ENCODE measurements at regions of chr17 and their contacts with region 1.

Region 1: DNA sequence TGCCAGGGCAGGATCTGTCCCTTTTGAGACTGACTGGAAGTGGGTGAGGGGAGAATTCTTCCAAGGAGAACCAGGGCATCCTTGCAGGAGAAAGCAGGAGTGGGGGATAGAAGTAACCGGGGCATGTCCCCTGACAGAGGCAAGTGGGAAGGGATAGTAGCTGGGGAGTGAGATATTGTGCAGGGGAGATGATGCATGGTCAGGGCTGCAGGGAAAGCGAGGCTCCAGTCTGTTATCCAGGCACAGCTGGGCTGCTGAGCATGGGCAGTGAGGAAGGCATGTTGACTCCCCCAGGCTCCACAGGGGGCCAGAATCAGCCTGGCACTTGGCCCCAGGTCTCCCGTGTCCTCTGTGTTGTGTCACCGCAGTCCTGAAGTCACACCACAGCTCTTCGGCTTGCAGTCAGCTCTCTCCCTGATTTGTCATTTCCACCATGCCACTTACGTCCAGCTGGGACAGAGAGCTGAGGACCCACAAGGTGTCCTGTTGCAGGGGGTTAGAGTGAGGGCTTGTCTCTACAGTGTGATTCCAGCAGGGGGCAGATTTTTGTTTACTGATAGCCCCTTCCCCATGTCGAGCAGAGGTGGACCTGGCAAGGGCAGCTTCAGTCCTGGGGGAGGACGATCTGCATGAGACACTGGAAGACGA is 40.9 kb downstream of the B9D1 start:
- DNase-seq: no peak
- H3K4me3 Mint-ChIP-seq: no peak overlapping the region
- H3K27ac Mint-ChIP-seq: no peak overlapping the region
- H3K4me1 Mint-ChIP-seq: no peaks in the 10 kb centered on the region
- H3K27me3 Mint-ChIP-seq: peaks cover 15% of the 10 kb centered on the region

Region 2: DNA sequence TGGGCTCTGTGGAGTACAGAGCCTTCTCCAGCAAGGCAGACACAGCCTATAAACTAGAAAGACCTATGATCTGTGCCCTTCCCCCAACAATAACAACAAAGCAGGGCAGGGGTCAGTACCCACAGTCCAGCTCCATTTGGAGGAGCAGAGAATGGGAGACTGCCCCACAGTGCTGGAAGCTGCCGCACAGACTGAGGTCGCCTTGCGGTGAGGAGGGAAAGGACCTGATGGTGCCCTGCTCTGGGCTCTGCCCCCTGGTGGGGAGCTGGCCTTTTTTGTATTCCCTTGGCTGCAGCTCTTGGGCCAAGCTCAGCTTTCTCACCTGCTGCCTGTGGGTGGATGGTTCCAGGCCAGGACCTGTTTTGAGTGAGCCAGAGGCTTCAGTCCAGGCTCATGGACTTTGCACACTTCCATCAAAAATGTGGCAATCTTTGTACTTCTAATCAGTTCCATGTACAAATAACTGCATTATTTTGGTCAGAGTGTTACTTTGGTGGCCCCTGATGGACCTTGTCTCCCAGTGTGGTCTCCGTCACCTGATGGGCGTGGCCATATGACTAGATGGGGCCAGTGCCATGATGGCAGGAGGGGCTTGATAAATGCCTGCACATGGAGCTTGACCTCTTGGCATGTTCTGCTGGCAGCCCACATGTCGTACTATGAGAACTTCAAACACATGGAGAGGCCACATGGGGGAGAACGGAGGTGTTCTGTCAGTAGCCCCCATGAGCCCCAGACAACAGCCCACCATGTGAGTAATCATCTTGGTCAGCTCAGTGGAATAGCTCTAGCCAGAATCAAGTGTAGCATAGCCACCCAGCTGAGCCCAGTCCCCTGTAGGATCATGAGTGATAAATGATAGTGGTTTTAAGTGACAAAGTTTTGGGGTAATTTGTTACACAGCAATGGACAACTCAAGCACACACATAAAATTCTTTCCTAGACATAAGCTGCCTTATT is 16.7 kb after region 1 on chr17:
- CTCF ChIA-PET with region 1: interaction called, 11 read pairs
- intact Hi-C with region 1: no loop called
- DNase-seq: peak; percentile 77
- H3K4me3 Mint-ChIP-seq: no peak overlapping the region
- H3K27ac Mint-ChIP-seq: no peak overlapping the region
- H3K4me1 Mint-ChIP-seq: peaks cover 2% of the 10 kb centered on the region
- H3K27me3 Mint-ChIP-seq: peaks cover 20% of the 10 kb centered on the region